Activated naive CD4-positive, alpha-beta T cell treated with anti-CD3 and anti-CD28 coated beads for 36 hours (primary cell): ENCODE measurements at regions of chrX and their contacts with region 1.

Region 1: GRCh38 chrX:133792198-133792953 is 193.0 kb downstream of the GPC3 start:
- DNase-seq: peak; percentile 69
- H3K4me3 Mint-ChIP-seq: no peak overlapping the region
- H3K27ac Mint-ChIP-seq: no peak overlapping the region
- H3K4me1 Mint-ChIP-seq: peaks cover 1% of the 10 kb centered on the region
- H3K27me3 Mint-ChIP-seq: no peaks in the 10 kb centered on the region

Region 2: GRCh38 chrX:133523081-133523487 is 269.3 kb before region 1 on chrX:
- CTCF ChIA-PET with region 1: no interaction called
- intact Hi-C with region 1: no loop called
- DNase-seq: no peak
- H3K4me3 Mint-ChIP-seq: no peak overlapping the region
- H3K27ac Mint-ChIP-seq: no peak overlapping the region
- H3K4me1 Mint-ChIP-seq: no peaks in the 10 kb centered on the region
- H3K27me3 Mint-ChIP-seq: no peaks in the 10 kb centered on the region

Region 3: GRCh38 chrX:133921764-133922389 is 129.5 kb after region 1 on chrX:
- CTCF ChIA-PET with region 1: interaction called, 11 read pairs
- intact Hi-C with region 1: loop called (anchors 1 kb)
- DNase-seq: peak; percentile 60
- H3K4me3 Mint-ChIP-seq: no peak overlapping the region
- H3K27ac Mint-ChIP-seq: no peak overlapping the region
- H3K4me1 Mint-ChIP-seq: peaks cover 17% of the 10 kb centered on the region
- H3K27me3 Mint-ChIP-seq: no peaks in the 10 kb centered on the region

Region 4: DNA sequence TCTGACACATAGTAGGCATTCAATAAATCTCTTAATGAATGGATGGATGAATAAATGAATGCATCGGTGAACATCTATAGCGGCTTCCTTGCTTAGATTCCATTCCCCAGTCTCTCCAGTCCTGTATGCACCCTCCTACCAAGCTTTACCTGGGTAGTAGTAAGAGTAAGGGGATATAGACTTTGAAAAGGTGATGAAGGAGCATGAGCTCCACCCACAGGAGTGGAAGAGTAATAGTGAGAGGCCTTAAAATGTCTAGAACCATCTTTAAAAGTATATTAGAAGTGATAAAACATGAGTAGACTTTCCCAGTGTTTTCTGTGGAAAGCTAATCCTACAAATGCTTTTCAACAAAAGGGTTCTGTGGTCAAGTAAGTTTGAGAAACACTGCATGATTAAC is 228.5 kb after region 1 on chrX:
- CTCF ChIA-PET with region 1: interaction called, 22 read pairs
- intact Hi-C with region 1: loop called (anchors 1 kb)
- DNase-seq: no peak
- H3K4me3 Mint-ChIP-seq: no peak overlapping the region
- H3K27ac Mint-ChIP-seq: no peak overlapping the region
- H3K4me1 Mint-ChIP-seq: no peaks in the 10 kb centered on the region
- H3K27me3 Mint-ChIP-seq: no peaks in the 10 kb centered on the region

Region 5: DNA sequence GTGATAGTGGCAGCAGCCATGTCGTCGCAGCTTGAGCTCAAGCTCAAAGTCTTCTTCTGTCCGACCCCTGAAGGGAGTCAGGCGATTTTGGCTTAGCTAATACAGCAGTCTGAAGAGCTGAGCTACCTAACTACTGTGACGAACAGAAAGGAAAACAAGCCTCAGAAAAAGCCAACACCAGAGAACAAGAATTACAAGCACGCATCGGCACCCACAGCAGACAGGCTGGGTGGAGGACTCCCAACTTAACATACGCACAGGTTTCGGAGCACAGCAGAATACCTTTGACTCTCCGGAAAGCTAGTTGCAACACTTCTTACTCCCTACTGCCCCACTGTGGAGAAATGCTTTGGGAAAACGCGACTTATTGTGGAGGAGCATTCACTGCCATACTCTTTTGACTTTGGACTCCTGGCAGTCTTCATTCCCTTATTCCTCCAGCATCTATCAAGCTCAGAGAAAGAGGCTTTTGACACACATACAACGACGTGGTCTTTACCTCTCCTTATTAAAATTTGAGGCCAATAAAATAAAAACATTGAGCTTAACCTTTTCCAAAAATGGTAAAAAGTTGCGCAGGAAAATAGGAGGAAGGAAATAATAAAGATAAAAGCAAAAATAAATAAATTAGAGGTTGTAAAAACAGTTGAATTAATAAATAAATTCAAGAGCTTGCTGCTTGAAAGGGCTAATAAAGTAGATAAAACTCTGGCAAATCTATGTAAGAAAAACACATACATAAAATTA is 234.4 kb after region 1 on chrX:
- CTCF ChIA-PET with region 1: interaction called, 22 read pairs
- intact Hi-C with region 1: loop called (anchors 1 kb)
- DNase-seq: peak; percentile 64
- H3K4me3 Mint-ChIP-seq: peak overlapping the region; percentile 29
- H3K27ac Mint-ChIP-seq: no peak overlapping the region
- H3K4me1 Mint-ChIP-seq: peaks cover 6% of the 10 kb centered on the region
- H3K27me3 Mint-ChIP-seq: no peaks in the 10 kb centered on the region

Region 6: DNA sequence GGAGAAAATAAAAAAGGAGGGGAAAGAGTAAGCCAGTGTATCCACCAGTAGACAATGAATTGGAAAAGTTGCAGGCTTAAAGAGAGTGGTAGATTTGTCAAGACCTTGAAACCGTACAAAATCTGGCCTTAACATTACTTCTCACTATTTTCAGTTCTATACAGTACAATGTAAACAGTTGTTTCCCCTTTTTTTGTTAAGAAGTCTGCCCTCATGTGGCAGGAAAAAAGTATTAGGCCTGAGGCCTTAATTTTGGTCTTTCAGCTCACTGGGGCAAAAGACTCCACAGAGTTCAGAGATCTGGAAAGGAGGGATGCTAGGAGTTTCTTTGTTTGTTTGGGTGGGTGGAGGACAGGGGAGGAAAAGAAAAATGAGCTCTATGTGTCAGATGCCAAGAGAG is 351.9 kb after region 1 on chrX:
- CTCF ChIA-PET with region 1: interaction called, 3 read pairs
- intact Hi-C with region 1: loop called (anchors 2 kb)
- DNase-seq: peak; percentile 6
- H3K4me3 Mint-ChIP-seq: no peak overlapping the region
- H3K27ac Mint-ChIP-seq: no peak overlapping the region
- H3K4me1 Mint-ChIP-seq: peaks cover 2% of the 10 kb centered on the region
- H3K27me3 Mint-ChIP-seq: no peaks in the 10 kb centered on the region

Region 7: DNA sequence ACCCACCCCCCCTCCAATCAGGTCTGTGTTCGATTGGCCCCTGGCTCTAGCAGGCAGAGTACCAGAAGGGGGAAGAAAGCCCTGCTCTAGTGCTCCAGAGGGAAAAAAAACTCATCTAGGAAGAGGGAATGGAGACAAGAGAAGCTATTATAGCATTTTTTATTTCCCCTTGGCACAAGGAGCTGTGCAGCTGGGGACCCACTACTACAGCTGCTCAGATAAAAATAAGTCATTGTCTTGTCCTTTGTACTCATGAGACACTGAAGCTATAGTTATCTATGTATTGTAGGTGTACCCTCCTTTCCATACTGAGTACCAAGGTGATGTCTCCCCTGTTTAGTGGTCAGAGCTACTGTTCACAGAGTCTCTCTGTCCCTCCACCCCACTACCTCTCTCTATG is 458.9 kb after region 1 on chrX:
- CTCF ChIA-PET with region 1: interaction called, 4 read pairs
- intact Hi-C with region 1: loop called (anchors 2 kb)
- DNase-seq: no peak
- H3K4me3 Mint-ChIP-seq: no peak overlapping the region
- H3K27ac Mint-ChIP-seq: no peak overlapping the region
- H3K4me1 Mint-ChIP-seq: peaks cover 5% of the 10 kb centered on the region
- H3K27me3 Mint-ChIP-seq: no peaks in the 10 kb centered on the region

Region 8: GRCh38 chrX:134396174-134396573 is 603.8 kb after region 1 on chrX:
- CTCF ChIA-PET with region 1: interaction called, 4 read pairs
- intact Hi-C with region 1: loop called (anchors 2 kb)
- DNase-seq: no peak
- H3K4me3 Mint-ChIP-seq: no peak overlapping the region
- H3K27ac Mint-ChIP-seq: no peak overlapping the region
- H3K4me1 Mint-ChIP-seq: peaks cover 9% of the 10 kb centered on the region
- H3K27me3 Mint-ChIP-seq: no peaks in the 10 kb centered on the region